ENCODE measurements at regions of chr19 and their contacts with region 1.

Region 1: DNA sequence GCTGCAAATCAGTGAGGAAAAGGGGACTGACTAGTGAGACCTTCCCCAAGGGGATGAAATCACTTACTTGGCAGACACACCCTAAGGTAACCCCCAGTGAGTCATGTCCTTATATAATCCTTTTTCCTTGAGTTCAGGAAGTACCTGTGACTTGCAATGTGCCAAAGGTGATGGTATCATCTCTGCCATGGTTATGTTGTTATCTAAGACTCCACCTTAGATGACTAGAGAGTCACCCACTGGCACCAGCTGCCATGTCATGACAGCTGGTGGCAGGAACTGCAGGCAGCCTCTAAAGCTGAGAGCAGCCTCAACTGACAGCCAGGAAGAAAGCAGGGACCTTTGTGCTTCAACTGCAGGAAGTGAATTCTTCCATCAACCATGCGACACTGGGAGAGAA is 12.5 kb downstream of the PBX4 start:
- DNase-seq: peak; percentile 67 to 100
- H3K4me3 ChIP-seq: 0 out of 2 replicates have a peak overlapping the region, but pooled peaks have one; percentile 6
- H3K27ac ChIP-seq: peak overlapping the region; percentile 76
- H3K4me1 ChIP-seq: peaks cover 48% of the 10 kb centered on the region
- H3K27me3 ChIP-seq: no peaks in the 10 kb centered on the region
- CTCF ChIP-seq: no peak

Region 2: GRCh38 chr19:19591133-19591825 is 14.7 kb before region 1 on chr19:
- CTCF ChIA-PET with region 1: no interaction called
- POLR2A ChIA-PET with region 1: interaction called, 5 read pairs
- intact Hi-C with region 1: loop called (anchors 1 kb)
- DNase-seq: peak; percentile 82 to 100
- H3K4me3 ChIP-seq: peak overlapping the region; percentile 35; the same call in 1 of the 2 replicates
- H3K27ac ChIP-seq: peak overlapping the region; percentile 88
- H3K4me1 ChIP-seq: peaks cover 61% of the 10 kb centered on the region
- H3K27me3 ChIP-seq: no peaks in the 10 kb centered on the region
- CTCF ChIP-seq: no peak

Region 3: DNA sequence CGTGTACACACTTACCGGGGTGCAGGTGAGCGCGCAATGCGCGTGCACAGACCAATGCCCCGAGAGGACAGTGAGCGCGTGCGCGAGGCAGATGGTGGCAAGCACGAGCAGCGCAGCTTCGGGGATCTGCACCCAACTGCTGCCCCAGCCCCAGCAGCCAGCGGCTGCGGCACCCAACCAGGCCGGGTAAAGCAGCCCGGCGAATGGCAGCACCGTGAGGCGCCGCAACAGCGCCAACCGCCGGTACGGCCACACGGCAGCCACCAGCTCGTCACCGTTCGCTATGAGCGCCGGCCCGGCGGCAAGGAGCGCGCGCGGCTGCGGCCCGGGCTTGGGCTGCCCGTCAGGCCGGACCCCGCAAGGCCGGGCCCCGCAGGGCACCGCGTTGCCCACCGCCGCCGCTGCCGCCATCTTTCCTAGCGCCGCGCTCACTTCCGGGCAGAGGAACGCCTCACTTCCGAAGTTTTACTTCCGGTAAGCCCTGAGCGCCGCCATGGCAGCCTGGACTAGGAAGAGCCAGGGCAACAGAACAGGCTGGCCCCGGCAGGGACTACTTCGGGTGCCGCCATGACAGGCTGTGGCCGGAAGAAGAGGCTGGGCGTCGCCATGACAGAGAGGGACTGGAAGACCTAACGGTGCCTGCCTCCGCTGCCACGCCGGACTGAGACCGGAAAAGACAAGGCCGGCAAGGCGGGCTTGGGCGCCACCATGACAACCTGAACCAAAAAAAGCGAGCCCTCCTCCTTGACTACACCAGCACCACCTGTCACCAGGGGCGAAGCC is 57.4 kb after region 1 on chr19 and contains the start of gene ATP13A1:
- CTCF ChIA-PET with region 1: no interaction called
- POLR2A ChIA-PET with region 1: no interaction called
- intact Hi-C with region 1: no loop called
- DNase-seq: peak; percentile 92 to 96
- H3K4me3 ChIP-seq: peak within 1 kb of the TSS; percentile 95
- H3K27ac ChIP-seq: peak within 1 kb of the TSS; percentile 64
- H3K4me1 ChIP-seq: peaks cover 19% of the 10 kb centered on the region
- H3K27me3 ChIP-seq: no peaks in the 10 kb centered on the region
- CTCF ChIP-seq: no peak
- total RNA-seq, gene ATP13A1: 41.1 and 59.7 TPM in 2 replicates

Region 4: DNA sequence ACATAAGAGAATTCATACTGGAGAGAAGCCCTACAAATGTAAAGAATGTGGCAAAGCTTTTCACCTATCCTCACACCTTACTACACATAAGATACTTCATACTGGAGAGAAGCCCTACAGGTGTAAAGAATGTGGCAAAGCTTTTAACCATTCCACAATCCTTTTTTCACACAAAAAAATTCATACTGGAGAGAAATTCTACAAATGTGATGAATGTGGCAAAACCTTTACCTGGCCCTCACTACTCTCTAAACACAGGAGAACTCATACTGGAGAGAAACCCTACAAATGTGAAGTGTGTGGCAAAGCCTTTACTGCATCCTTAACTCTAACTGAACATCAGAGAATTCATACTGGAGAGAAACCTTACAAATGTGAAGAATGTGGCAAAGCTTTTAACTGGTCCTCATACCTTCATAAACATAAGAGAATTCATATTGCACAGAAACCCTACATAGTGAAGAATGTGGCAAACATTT is 229.6 kb after region 1 on chr19:
- CTCF ChIA-PET with region 1: interaction called, 13 read pairs
- POLR2A ChIA-PET with region 1: no interaction called
- intact Hi-C with region 1: no loop called
- DNase-seq: no peak
- H3K4me3 ChIP-seq: no peak overlapping the region
- H3K27ac ChIP-seq: no peak overlapping the region
- H3K4me1 ChIP-seq: no peaks in the 10 kb centered on the region
- H3K27me3 ChIP-seq: no peaks in the 10 kb centered on the region
- CTCF ChIP-seq: no peak